T-cell (primary cell): ENCODE measurements at regions of chrX and their contacts with region 1.

Region 1: DNA sequence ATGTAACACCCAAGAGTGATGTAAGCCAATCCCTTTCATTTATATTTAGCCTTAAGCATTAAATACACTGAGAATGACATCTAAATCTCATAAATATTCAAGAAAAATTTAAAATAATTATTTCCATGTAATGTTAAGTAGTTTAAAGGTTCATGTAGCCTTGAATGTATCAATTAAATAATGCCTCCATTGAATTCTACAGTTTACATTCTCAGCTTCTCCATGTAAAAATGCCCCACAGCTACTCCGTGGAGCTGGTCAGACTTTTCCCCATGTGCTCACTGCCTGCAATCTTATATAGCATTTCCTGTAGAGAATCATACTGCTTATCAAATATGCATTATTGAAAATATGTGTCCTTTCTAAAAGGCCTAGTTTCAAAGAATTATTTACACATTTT is 25.4 kb downstream of the AP1S2 start:
- DNase-seq: no peak
- ATAC-seq: no peak
- H3K4me3 ChIP-seq: no peak overlapping the region
- H3K4me3 Mint-ChIP-seq: no peak overlapping the region
- H3K27ac ChIP-seq: no peak overlapping the region
- H3K27ac Mint-ChIP-seq: no peak overlapping the region
- H3K4me1 ChIP-seq: no peaks in the 10 kb centered on the region
- H3K4me1 Mint-ChIP-seq: peaks cover 0 to 7% (median 3%) of the 10 kb centered on the region in 3 donors
- H3K27me3 ChIP-seq: no peaks in the 10 kb centered on the region
- H3K27me3 Mint-ChIP-seq: no peaks in the 10 kb centered on the region

Region 2: DNA sequence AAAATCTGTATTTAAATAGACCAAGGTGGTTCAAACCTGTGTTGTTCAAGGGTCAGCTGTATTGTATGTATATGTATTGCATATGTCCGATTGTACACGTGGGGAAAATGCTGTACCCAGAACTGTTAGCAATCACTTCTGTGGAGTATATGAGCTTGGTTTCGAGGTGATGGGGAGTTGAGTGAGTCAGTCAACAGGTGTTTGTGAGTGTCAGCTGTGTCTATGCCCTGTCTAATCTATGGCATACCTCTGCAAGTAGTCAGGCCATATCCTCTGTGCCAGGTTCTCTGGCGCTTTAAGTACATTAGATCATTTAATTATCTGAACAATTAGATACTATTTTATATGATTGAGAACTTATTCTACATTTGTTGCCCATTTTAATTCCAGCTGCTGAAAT is 31.5 kb before region 1 on chrX:
- CTCF ChIA-PET with region 1: no interaction called
- POLR2A ChIA-PET with region 1: interaction called in 1 of 2 experiments, 11 read pairs
- DNase-seq: no peak
- ATAC-seq: no peak
- H3K4me3 ChIP-seq: no peak overlapping the region
- H3K4me3 Mint-ChIP-seq: peak overlapping the region in 1 of 3 donors; percentile 28
- H3K27ac ChIP-seq: no peak overlapping the region
- H3K27ac Mint-ChIP-seq: no peak overlapping the region
- H3K4me1 ChIP-seq: peaks cover 0 to 2% of the 10 kb centered on the region in 2 experiments
- H3K4me1 Mint-ChIP-seq: peaks cover 46 to 66% (median 56%) of the 10 kb centered on the region in 3 donors
- H3K27me3 ChIP-seq: no peaks in the 10 kb centered on the region
- H3K27me3 Mint-ChIP-seq: no peaks in the 10 kb centered on the region

Region 3: DNA sequence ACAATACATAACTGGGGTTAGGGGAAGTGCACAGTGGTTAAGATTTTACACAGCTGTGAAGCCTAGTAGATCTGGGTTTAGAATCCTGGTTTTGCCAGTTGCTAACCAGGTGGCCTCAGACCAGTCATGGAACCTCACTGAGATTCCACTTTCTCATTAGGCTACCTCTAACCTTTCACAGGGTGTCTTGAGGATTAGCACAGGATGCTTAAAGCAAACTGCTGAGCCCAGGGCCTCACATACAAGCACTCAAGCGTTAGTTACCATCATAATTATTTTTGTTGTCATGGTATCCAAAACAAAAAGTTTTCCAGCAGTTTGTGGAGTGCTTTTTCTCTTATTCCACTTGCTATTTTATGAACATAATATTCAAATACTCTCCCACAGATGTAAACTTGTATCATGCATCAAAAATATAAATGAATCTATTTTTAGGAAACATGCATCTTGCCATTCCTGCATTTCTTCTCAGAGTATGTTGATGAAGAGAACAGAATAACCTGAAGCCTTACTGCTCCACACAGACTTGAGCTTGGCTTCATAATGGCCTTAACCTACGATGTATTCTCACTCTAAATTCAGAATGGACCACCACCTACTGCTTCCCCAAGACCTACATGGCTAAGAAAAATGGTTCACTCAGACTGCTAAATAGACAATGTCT is 12.8 kb after region 1 on chrX:
- CTCF ChIA-PET with region 1: no interaction called
- POLR2A ChIA-PET with region 1: no interaction called
- DNase-seq: no peak
- ATAC-seq: no peak
- H3K4me3 ChIP-seq: no peak overlapping the region
- H3K4me3 Mint-ChIP-seq: no peak overlapping the region
- H3K27ac ChIP-seq: no peak overlapping the region
- H3K27ac Mint-ChIP-seq: no peak overlapping the region
- H3K4me1 ChIP-seq: no peaks in the 10 kb centered on the region
- H3K4me1 Mint-ChIP-seq: peaks cover 0 to 4% (median 4%) of the 10 kb centered on the region in 3 donors
- H3K27me3 ChIP-seq: no peaks in the 10 kb centered on the region
- H3K27me3 Mint-ChIP-seq: no peaks in the 10 kb centered on the region